ENCODE measurements at regions of chr12 and their contacts with region 1.

Region 1: GRCh38 chr12:2057041-2057794 is 4.4 kb downstream of the CACNA1C start:
- DNase-seq: no peak
- ATAC-seq: peak; percentile 17

Region 2: GRCh38 chr12:1890810-1891209 is 166.4 kb before region 1 on chr12:
- intact Hi-C with region 1: no loop called
- DNase-seq: no peak
- ATAC-seq: no peak

Region 3: DNA sequence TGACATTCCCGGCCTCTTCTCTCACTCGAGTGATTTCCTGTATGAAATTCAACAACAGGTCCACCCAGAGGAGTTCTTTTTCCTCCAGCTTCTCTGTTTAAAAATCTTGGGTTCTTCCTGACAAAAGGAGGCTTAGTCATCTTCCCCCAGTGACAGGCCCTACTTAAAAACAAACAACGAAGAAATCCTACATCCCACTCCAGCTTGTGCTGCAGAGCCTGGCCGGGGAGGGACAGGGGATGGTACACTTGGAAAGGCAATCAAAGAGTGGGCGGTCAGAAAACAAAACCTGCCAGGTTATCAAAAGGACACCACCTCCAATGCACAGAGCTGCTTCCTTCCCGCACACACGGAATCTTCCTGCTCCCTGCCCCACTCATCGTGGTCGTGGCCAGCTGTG is 96.8 kb after region 1 on chr12:
- intact Hi-C with region 1: loop called (anchors 5 kb)
- DNase-seq: no peak
- ATAC-seq: peak; percentile 42

Region 4: GRCh38 chr12:2179953-2180736 is 122.9 kb after region 1 on chr12:
- intact Hi-C with region 1: loop called (anchors 5 kb)
- DNase-seq: peak; percentile 77
- ATAC-seq: peak; percentile 87

Region 5: GRCh38 chr12:2212971-2213869 is 156.0 kb after region 1 on chr12:
- intact Hi-C with region 1: no loop called
- DNase-seq: no peak
- ATAC-seq: peak; percentile 37

Region 6: GRCh38 chr12:2273288-2273687 is 216.1 kb after region 1 on chr12:
- intact Hi-C with region 1: loop called (anchors 1 kb)
- DNase-seq: peak; percentile 83
- ATAC-seq: peak; percentile 71